A673 (cell line): ENCODE measurements at regions of chr14 and their contacts with region 1.

Region 1: GRCh38 chr14:22852940-22853767 is 16.8 kb downstream of the MMP14 start:
- DNase-seq: peak; percentile 93
- H3K4me3 ChIP-seq: peak overlapping the region; percentile 43
- H3K27ac ChIP-seq: peak overlapping the region; percentile 72
- H3K4me1 ChIP-seq: peaks cover 18% of the 10 kb centered on the region
- H3K27me3 ChIP-seq: no peaks in the 10 kb centered on the region
- CTCF ChIP-seq: peak; percentile 92

Region 2: GRCh38 chr14:22386924-22387775 is 466.0 kb before region 1 on chr14:
- CTCF ChIA-PET with region 1: interaction called, 3 read pairs
- POLR2A ChIA-PET with region 1: no interaction called
- intact Hi-C with region 1: loop called (anchors 2 kb)
- DNase-seq: peak; percentile 94
- H3K4me3 ChIP-seq: no peak overlapping the region
- H3K27ac ChIP-seq: no peak overlapping the region
- H3K4me1 ChIP-seq: peaks cover 31% of the 10 kb centered on the region
- H3K27me3 ChIP-seq: no peaks in the 10 kb centered on the region
- CTCF ChIP-seq: peak; percentile 87

Region 3: GRCh38 chr14:22556990-22557623 is 296.0 kb before region 1 on chr14:
- CTCF ChIA-PET with region 1: interaction called, 4 read pairs
- POLR2A ChIA-PET with region 1: no interaction called
- intact Hi-C with region 1: loop called (anchors 1 kb)
- DNase-seq: peak; percentile 88
- H3K4me3 ChIP-seq: peak overlapping the region; percentile 27
- H3K27ac ChIP-seq: peak overlapping the region; percentile 72
- H3K4me1 ChIP-seq: peaks cover 63% of the 10 kb centered on the region
- H3K27me3 ChIP-seq: no peaks in the 10 kb centered on the region
- CTCF ChIP-seq: peak; percentile 100

Region 4: DNA sequence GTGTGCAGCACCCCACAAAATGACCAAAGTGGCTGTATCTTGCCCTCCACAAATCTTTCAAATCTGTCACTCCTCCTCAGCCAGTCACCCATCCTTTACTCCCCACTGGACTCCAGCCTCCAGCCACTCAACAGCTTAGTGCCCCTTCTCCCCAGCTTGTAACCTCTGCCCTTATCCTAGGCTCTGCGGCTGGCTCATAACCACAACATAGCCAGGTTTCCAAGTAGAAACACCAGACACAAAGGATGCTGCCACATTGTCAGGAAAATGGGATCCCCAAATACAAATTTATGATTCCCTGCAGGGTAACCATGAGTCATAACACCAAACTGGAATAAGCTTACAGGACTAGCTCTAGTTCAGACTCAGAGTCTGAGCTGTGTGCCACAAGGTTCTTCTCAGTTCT is 71.6 kb before region 1 on chr14:
- CTCF ChIA-PET with region 1: interaction called, 3 read pairs
- POLR2A ChIA-PET with region 1: no interaction called
- intact Hi-C with region 1: loop called (anchors 1 kb)
- DNase-seq: peak; percentile 32
- H3K4me3 ChIP-seq: no peak overlapping the region
- H3K27ac ChIP-seq: peak overlapping the region; percentile 68
- H3K4me1 ChIP-seq: peaks cover 4% of the 10 kb centered on the region
- H3K27me3 ChIP-seq: no peaks in the 10 kb centered on the region
- CTCF ChIP-seq: no peak

Region 5: DNA sequence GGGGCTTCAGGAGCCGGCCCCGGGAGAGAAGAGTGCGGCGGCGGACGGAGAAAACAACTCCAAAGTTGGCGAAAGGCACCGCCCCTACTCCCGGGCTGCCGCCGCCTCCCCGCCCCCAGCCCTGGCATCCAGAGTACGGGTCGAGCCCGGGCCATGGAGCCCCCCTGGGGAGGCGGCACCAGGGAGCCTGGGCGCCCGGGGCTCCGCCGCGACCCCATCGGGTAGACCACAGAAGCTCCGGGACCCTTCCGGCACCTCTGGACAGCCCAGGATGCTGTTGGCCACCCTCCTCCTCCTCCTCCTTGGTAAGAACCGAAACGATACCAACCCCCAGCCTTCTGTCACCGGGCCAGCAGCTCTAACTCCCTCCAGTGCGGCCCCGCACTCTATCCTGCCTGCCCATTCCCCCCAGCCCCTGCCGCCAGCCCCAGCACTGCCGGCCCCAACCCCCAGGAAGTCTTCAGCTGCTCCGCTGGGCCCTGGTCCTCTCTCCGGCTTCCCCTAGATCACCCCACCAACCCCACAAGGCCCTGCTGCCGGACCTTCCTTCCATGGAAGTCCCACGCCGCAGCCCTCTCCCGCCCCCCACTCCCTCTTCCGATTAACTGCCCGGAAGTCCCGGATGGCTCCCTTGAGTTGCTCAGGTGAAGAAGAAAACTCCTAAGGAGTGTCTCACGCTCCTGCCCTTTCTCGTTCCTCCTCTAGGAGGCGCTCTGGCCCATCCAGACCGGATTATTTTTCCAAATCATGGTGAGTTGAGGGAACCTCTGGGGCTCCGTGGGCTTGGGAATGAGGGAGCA is 19.1 kb after region 1 on chr14:
- CTCF ChIA-PET with region 1: no interaction called
- POLR2A ChIA-PET with region 1: no interaction called
- intact Hi-C with region 1: no loop called
- DNase-seq: peak; percentile 83
- H3K4me3 ChIP-seq: peak overlapping the region; percentile 96
- H3K27ac ChIP-seq: peak overlapping the region; percentile 75
- H3K4me1 ChIP-seq: peaks cover 12% of the 10 kb centered on the region
- H3K27me3 ChIP-seq: no peaks in the 10 kb centered on the region
- CTCF ChIP-seq: peak; percentile 97